ENCODE measurements at regions of chr13 and their contacts with region 1.

Region 1: GRCh38 chr13:97205982-97206381 is 16.2 kb upstream of the MBNL2 start:
- DNase-seq: no peak
- H3K4me3 ChIP-seq: no peak overlapping the region
- H3K27ac ChIP-seq: no peak overlapping the region
- H3K4me1 ChIP-seq: no peaks in the 10 kb centered on the region
- H3K27me3 ChIP-seq: no peaks in the 10 kb centered on the region
- CTCF ChIP-seq: no peak
- EP300 ChIP-seq: no peak
- POLR2A ChIP-seq: no peak

Region 2: DNA sequence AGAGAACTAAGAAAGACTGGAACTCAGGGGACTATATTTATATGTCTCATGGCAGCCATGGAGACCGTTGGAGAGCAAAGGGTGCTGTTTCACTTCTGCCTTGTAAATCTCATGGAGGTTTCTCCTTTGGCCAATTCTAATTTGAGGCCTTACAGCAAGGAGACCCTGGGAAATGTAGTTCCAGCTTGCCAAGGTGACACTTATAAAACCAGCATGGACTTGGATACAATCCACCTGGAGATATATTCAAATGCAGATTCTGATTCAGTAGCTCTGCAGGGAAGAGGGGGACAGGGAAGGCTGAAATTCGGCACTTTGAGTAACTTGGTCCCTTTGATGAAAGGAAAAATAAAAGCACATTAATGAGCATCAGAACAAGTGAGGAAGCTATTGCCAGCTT is 301.8 kb before region 1 on chr13:
- in situ Hi-C with region 1: no loop called
- intact Hi-C with region 1: no loop called
- DNase-seq: no peak
- H3K4me3 ChIP-seq: no peak overlapping the region
- H3K27ac ChIP-seq: no peak overlapping the region
- H3K4me1 ChIP-seq: no peaks in the 10 kb centered on the region
- H3K27me3 ChIP-seq: no peaks in the 10 kb centered on the region
- CTCF ChIP-seq: no peak
- EP300 ChIP-seq: no peak
- POLR2A ChIP-seq: no peak

Region 3: DNA sequence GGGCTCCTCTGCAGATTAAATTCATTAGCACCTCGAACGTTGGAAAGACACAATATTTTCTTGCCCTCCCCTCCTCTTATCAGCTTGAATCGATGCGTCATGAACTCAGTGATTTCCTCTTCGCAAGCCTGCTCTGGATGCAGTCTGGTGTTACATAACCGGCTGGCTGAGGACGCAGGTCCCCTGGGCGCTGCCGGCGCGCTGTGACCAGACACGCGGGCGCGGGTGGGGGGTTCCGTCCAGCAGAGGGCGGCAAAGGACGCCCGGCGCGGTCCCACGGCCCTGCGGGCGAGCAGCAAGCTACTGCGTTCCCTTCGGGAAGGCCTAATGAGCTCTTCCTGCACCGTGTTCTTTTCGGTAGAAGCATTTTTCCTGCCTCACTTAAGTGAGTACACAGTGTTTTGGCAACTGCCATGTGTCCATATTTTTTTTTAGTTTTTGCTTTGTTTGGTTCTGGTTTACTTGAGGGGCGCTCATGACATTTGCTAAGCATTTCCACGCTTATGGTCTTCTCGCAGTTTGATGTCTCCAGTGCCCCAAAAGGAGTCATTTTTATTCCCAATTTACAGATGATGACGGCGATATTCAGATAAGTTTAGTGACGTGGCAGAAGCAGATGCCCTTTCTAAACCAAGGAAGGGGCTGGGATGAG is 96.0 kb before region 1 on chr13:
- in situ Hi-C with region 1: loop called in 2 of 4 experiments (anchors 10 to 25 kb)
- intact Hi-C with region 1: no loop called
- DNase-seq: peak; percentile 92
- H3K4me3 ChIP-seq: peak overlapping the region in 1 of 4 donors; percentile 8
- H3K27ac ChIP-seq: peak overlapping the region; percentile 39 to 84 (median 80)
- H3K4me1 ChIP-seq: peaks cover 11 to 38% (median 26%) of the 10 kb centered on the region in 4 donors
- H3K27me3 ChIP-seq: no peaks in the 10 kb centered on the region
- CTCF ChIP-seq: peak; percentile 93 to 97 (median 96)
- EP300 ChIP-seq: no peak
- POLR2A ChIP-seq: no peak

Measured in transverse colon (tissue), 4 donors.